ENCODE measurements at regions of chr11 and their contacts with region 1.

Region 1: GRCh38 chr11:65625628-65626342 is 10.2 kb downstream of the PCNX3 start:
- DNase-seq: peak; percentile 73
- ATAC-seq: peak; percentile 85
- H3K4me3 Mint-ChIP-seq: no peak overlapping the region
- H3K27ac Mint-ChIP-seq: no peak overlapping the region
- H3K4me1 Mint-ChIP-seq: no peaks in the 10 kb centered on the region
- H3K27me3 Mint-ChIP-seq: no peaks in the 10 kb centered on the region

Region 2: DNA sequence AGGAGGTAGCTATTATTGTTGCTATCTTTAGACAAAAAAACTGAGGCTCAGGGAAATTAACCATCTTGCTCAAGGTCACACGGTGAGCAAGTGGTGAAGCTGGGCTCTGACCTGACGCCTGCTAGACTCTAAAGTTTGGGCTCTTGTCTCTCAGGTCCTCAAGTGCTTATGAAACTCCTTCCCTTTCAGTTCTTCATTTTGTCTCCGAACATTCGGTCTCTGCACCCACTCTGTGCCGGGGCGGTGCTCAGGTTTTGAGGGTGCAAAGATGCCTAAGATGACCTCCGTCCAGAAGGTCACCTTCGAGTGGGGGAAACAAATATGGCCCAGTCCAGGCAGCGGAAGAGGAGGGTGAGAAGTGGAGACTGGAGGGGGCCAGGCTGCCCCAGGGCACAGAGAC is 177.1 kb after region 1 on chr11:
- CTCF ChIA-PET with region 1: no interaction called
- POLR2A ChIA-PET with region 1: no interaction called
- intact Hi-C with region 1: no loop called
- DNase-seq: no peak
- ATAC-seq: no peak
- H3K4me3 Mint-ChIP-seq: no peak overlapping the region
- H3K27ac Mint-ChIP-seq: no peak overlapping the region
- H3K4me1 Mint-ChIP-seq: no peaks in the 10 kb centered on the region
- H3K27me3 Mint-ChIP-seq: peaks cover 19% of the 10 kb centered on the region

Region 3: DNA sequence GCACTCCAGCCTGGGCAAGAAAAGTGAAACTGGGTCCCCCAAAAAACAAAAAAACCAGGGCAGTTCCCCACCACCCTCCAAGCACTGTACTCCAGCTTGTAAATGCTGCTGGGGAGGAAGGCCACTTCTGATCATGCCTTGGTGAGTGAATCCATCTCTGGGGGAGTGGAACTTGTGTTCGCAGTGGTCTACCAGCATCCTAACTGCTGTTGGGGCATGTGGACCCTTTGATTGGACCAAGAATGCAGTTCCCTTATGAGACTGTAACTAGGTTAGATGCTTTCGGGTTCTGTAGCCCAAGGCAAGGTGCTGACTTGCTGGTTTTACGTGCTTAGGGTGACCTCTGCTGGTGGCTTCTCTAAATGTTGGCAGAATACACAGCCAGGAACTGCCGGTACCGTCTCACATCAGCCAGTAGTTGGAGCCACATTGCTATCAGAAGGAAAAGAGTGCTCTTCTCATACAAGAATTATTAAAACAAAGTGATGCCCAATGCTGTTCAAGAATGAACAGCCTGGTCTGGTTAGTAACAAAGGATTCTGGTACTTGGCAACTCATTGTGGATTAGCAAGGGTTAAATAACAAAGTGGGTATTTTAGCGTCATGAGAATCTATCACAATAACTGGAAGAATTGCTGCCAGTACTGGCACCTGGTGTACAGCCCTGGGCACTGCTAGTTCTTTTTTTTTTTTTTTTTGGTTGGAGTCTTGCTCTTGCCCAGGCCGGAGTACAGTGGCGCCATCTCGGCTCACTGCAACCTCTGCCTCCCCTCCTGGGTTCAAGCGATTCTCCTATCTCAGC is 363.2 kb after region 1 on chr11:
- CTCF ChIA-PET with region 1: no interaction called
- POLR2A ChIA-PET with region 1: no interaction called
- intact Hi-C with region 1: loop called in 1 of 2 experiments (anchors 2 kb)
- DNase-seq: peak; percentile 95
- ATAC-seq: peak; percentile 99
- H3K4me3 Mint-ChIP-seq: no peak overlapping the region
- H3K27ac Mint-ChIP-seq: peak overlapping the region; percentile 59
- H3K4me1 Mint-ChIP-seq: peaks cover 2% of the 10 kb centered on the region
- H3K27me3 Mint-ChIP-seq: no peaks in the 10 kb centered on the region